ENCODE measurements at regions of chr3 and their contacts with region 1.

Region 1: DNA sequence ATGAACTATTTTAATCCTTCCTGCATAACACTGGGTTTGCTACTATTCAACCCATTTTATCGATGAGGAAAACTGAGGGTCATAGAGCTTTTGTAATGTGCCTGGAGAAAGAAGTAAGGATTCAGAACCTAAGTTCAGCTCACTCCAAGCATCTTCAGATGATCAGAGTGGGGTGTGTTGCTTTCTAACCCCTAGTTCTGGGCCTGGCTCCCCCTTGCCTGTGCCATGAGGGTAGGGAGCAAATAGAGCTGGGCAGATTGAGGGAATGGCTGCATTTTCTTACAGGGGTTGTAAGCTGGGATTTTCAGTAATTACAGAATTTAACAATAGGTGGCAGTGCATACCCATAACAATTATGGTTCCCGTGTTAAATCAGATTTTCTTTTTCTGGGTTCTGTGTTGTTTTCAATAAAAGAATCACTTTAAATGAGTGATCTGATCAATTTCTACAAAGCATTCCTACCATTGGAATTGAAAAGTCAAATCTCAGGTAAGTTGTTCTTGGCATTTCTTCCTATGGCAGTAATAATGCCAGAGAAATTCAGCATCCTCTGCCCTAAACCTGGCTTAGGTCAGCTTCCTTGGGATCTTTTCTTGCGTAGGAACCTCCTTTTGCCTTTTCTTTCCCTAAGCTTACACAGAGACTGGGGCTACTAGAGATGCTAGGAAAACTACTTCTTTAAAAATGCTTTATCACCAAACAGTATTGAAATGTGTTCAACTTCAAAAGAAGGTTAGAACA is 103.8 kb upstream of the IL12A start:
- DNase-seq: peak; percentile 44 to 49
- ATAC-seq: peak; percentile 77 to 82; a peak in 4 of 6 replicates
- H3K4me3 ChIP-seq: no peak overlapping the region
- H3K27ac ChIP-seq: peak overlapping the region; percentile 2 to 40; a peak in 4 of 6 replicates
- H3K4me1 ChIP-seq: no peaks in the 10 kb centered on the region
- CTCF ChIP-seq: peak; percentile 80
- EP300 ChIP-seq: no peak
- POLR2A ChIP-seq: no peak
- RAD21 ChIP-seq: peak; percentile 71 to 86

Region 2: GRCh38 chr3:159675285-159675684 is 209.5 kb before region 1 on chr3:
- CTCF ChIA-PET with region 1: no interaction called
- POLR2A ChIA-PET with region 1: no interaction called
- DNase-seq: no peak
- ATAC-seq: no peak
- H3K4me3 ChIP-seq: no peak overlapping the region
- H3K27ac ChIP-seq: no peak overlapping the region
- H3K4me1 ChIP-seq: 0 out of 3 replicates have a peak, but pooled peaks cover 1% of the 10 kb centered on the region
- CTCF ChIP-seq: no peak
- EP300 ChIP-seq: no peak
- POLR2A ChIP-seq: no peak
- RAD21 ChIP-seq: no peak

Region 3: DNA sequence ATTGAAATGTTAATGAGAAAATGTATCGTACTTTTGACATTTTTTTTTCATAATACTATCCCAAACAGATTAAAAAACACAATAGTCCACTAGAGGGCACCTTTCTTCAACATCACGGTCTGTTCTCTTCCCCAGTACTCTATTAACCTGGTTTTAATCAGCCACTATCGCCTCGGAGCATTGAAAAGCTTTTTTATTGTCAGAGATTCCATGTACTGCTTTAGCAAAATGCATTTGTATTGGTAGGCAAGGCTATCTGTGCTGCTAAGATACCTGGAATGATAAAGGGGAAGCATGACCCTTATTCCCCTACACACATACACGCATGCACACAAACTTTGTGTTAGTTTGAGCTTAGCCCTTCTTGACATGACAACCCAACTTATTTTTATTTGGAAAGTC is 56.3 kb before region 1 on chr3:
- CTCF ChIA-PET with region 1: interaction called, 46 read pairs
- POLR2A ChIA-PET with region 1: no interaction called
- DNase-seq: peak; percentile 38 to 54
- ATAC-seq: peak in 1 of 2 experiments; percentile 66; a peak in 3 of 6 replicates
- H3K4me3 ChIP-seq: no peak overlapping the region
- H3K27ac ChIP-seq: peak overlapping the region; percentile 78 to 85
- H3K4me1 ChIP-seq: peaks cover 50% of the 10 kb centered on the region
- CTCF ChIP-seq: peak; percentile 72
- EP300 ChIP-seq: no peak
- POLR2A ChIP-seq: no peak
- RAD21 ChIP-seq: peak; percentile 62 to 71

Region 4: DNA sequence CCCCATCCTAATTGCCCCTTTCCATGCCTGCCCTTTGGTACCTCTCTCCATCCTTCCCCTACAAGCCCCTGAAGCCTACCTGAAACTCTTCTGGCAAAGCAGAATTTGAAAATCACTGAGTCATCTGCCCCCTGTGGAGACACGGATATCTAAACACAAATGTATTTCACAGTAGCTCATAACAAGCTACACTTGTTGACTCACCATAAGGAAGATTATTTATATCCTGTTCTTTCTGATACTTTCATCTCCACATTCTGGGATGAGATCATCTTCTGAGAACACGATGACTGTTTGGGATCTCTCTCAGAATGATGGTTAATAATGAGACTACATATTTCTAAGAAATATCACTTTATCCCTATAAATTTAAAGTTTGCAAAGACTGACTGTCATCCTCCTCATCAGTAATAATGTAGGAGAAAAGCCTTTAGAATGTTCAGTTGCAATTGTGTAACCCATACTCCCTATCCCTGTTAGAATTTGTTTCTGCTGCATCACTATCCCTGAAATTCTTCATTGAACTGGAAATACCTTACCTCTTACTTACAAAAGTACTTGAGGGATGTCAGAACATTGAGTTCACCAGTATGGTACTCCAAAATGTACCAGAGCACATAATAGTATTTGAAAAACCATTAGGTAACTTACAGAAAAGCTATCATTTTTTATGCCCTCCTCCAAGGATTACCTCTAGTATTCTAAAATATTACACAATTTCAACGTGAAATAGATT is 12.3 kb before region 1 on chr3:
- CTCF ChIA-PET with region 1: interaction called, 57 read pairs
- POLR2A ChIA-PET with region 1: no interaction called
- DNase-seq: peak; percentile 83 to 84
- ATAC-seq: peak; percentile 97 to 98
- H3K4me3 ChIP-seq: no peak overlapping the region
- H3K27ac ChIP-seq: peak overlapping the region; percentile 77 to 81
- H3K4me1 ChIP-seq: peaks cover 37% of the 10 kb centered on the region
- CTCF ChIP-seq: no peak
- EP300 ChIP-seq: peak; percentile 52 to 64; a peak in 2 of 5 replicates
- POLR2A ChIP-seq: no peak
- RAD21 ChIP-seq: no peak; a peak in 1 of 5 replicates

Region 5: DNA sequence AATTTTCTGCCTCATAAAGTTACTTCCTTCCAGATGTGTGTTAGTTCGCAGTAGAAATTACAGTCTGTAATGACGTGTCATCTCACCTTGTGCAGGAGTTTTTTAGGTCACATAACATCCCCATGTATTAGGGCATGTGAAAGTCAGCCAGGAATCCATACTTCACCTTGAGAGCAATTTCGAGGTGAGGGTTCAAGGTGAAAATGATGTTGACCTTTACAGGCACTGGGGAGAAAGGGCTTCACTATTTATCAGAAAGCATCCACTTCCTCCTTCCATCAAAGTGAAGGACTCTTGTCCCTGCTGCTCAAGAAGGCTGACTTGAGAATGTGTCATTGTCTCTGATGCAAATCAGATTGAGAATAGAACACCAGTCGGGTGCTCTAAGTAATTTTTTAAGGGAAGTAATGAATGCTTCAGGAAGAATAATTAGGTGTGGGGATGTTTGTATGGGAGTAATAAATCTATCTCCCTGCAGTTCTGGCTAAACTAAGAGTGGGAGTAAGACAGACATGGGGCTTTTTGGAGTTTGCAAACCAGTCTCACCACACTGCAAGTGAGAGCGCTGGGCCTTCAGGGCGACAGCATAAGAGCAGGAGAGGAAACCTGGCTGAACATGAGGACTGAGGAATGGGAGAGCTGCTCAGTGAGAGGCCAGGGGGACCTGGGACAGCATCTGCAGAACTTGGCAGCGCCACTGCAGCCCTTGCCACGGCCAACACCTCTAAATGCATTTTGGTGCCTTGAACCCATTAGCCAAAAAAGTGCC is 17.9 kb after region 1 on chr3:
- CTCF ChIA-PET with region 1: interaction called, 93 read pairs
- POLR2A ChIA-PET with region 1: no interaction called
- DNase-seq: no peak
- ATAC-seq: peak in 1 of 2 experiments; percentile 32; a peak in 2 of 6 replicates
- H3K4me3 ChIP-seq: no peak overlapping the region
- H3K27ac ChIP-seq: no peak overlapping the region
- H3K4me1 ChIP-seq: no peaks in the 10 kb centered on the region
- CTCF ChIP-seq: no peak
- EP300 ChIP-seq: no peak
- POLR2A ChIP-seq: no peak
- RAD21 ChIP-seq: no peak

Region 6: GRCh38 chr3:159941038-159941944 is 56.5 kb after region 1 on chr3:
- CTCF ChIA-PET with region 1: interaction called, 10 read pairs
- POLR2A ChIA-PET with region 1: no interaction called
- DNase-seq: no peak
- ATAC-seq: no peak
- H3K4me3 ChIP-seq: no peak overlapping the region
- H3K27ac ChIP-seq: no peak overlapping the region
- H3K4me1 ChIP-seq: 0 out of 3 replicates have a peak, but pooled peaks cover 2% of the 10 kb centered on the region
- CTCF ChIP-seq: no peak
- EP300 ChIP-seq: no peak
- POLR2A ChIP-seq: no peak
- RAD21 ChIP-seq: no peak

Region 7: DNA sequence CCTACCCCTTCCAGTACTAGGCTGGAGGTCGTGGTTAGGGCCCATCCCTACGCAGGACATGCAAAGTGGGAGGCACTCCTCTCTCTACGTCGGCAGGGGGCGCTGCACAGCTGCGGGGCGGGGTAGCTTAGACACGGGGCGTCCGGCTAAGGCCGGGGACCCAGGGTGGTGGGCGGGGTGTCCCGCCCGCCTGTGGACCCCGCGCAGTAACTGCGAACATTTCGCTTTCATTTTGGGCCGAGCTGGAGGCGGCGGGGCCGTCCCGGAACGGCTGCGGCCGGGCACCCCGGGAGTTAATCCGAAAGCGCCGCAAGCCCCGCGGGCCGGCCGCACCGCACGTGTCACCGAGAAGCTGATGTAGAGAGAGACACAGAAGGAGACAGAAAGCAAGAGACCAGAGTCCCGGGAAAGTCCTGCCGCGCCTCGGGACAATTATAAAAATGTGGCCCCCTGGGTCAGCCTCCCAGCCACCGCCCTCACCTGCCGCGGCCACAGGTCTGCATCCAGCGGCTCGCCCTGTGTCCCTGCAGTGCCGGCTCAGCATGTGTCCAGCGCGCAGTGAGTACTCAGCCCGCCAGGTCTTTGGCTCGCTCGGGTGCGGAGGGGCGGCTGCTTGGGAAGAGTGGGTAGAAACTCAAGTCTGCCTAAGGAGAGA is 103.9 kb after region 1 on chr3 and contains the start of gene IL12A:
- CTCF ChIA-PET with region 1: interaction called, 49 read pairs
- POLR2A ChIA-PET with region 1: interaction called, 5 read pairs
- DNase-seq: peak; percentile 81 to 82
- ATAC-seq: peak; percentile 96 to 99
- H3K4me3 ChIP-seq: peak within 1 kb of the TSS; percentile 85
- H3K27ac ChIP-seq: peak within 1 kb of the TSS; percentile 84 to 90
- H3K4me1 ChIP-seq: 0 out of 3 replicates have a peak, but pooled peaks cover 8% of the 10 kb centered on the region
- CTCF ChIP-seq: peak; percentile 94
- EP300 ChIP-seq: no peak
- POLR2A ChIP-seq: no peak
- RAD21 ChIP-seq: peak; percentile 59 to 65
- polyA plus RNA-seq, gene IL12A: 0.66 and 1.7 TPM in 2 replicates

Region 8: GRCh38 chr3:160027541-160028195 is 142.8 kb after region 1 on chr3:
- CTCF ChIA-PET with region 1: interaction called, 18 read pairs
- POLR2A ChIA-PET with region 1: no interaction called
- DNase-seq: peak in 1 of 2 experiments; percentile 23
- ATAC-seq: peak; percentile 44 to 63; a peak in 3 of 6 replicates
- H3K4me3 ChIP-seq: no peak overlapping the region
- H3K27ac ChIP-seq: peak overlapping the region; percentile 48 to 72; a peak in 5 of 6 replicates
- H3K4me1 ChIP-seq: peaks cover 19% of the 10 kb centered on the region
- CTCF ChIP-seq: no peak
- EP300 ChIP-seq: no peak
- POLR2A ChIP-seq: no peak
- RAD21 ChIP-seq: no peak

Measured in A549 (cell line).